CD4-positive, alpha-beta memory T cell (primary cell): ENCODE measurements at regions of chr18 and their contacts with region 1.

Region 1: GRCh38 chr18:11872479-11873136 is 21.4 kb downstream of the CHMP1B start:
- DNase-seq: peak in 2 of 5 donors; percentile 11 to 12
- H3K4me3 ChIP-seq: no peak overlapping the region
- H3K4me3 Mint-ChIP-seq: no peak overlapping the region
- H3K27ac ChIP-seq: no peak overlapping the region
- H3K27ac Mint-ChIP-seq: no peak overlapping the region
- H3K4me1 ChIP-seq: peaks cover 7% of the 10 kb centered on the region
- H3K4me1 Mint-ChIP-seq: peaks cover 0 to 4% (median 0%) of the 10 kb centered on the region in 4 donors
- H3K27me3 ChIP-seq: no peaks in the 10 kb centered on the region
- H3K27me3 Mint-ChIP-seq: peaks cover 0 to 4% of the 10 kb centered on the region in 2 donors

Region 2: DNA sequence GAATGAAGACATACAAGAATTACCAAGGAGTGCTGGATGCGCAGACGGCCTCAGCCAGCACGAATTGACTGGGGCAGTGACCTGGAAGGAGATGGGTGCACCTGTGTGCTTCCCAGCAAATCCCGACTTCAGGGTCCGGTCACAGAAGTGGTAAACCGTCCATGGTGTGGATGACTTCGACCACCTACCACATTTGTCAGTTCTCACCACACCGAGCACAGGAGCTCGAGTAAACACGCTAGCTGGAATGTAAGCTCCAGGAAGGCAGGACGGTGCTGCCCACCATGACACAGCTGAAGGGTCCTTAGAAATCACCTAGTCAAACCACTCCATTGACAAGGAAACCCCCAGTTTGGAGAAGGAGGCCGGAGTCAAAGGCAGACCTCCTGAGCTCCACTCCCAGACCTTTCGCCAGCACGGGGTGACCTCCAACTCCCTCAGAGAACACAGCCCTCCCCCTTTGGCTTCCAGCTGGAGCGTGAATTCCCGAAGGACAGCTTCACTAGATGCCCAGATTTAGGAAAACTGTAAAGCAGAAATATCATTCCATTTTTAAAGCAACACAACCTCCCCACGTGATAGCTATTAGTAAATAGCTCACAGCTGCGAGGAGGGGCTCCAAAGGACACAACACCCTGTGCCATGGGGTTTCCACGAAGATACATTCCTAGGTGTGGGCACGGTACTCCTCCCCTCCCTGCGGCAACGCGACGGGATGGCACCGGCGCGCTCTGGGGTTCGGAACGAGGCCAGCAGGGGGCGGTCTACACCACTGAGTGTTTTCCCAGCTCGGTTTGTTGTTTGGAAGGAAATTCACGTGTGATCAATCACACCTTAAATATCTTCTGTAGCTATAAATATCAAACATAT is 217.6 kb before region 1 on chr18:
- CTCF ChIA-PET with region 1: no interaction called
- POLR2A ChIA-PET with region 1: no interaction called
- intact Hi-C with region 1: loop called (anchors 5 kb)
- DNase-seq: peak in 3 of 5 donors; percentile 5 to 16 (median 13)
- H3K4me3 ChIP-seq: peak overlapping the region in 1 of 2 donors; percentile 8
- H3K4me3 Mint-ChIP-seq: no peak overlapping the region
- H3K27ac ChIP-seq: no peak overlapping the region
- H3K27ac Mint-ChIP-seq: no peak overlapping the region
- H3K4me1 ChIP-seq: no peaks in the 10 kb centered on the region
- H3K4me1 Mint-ChIP-seq: peaks cover 0 to 6% (median 3%) of the 10 kb centered on the region in 4 donors
- H3K27me3 ChIP-seq: no peaks in the 10 kb centered on the region
- H3K27me3 Mint-ChIP-seq: peaks cover 14 to 45% of the 10 kb centered on the region in 2 donors

Region 3: GRCh38 chr18:12076424-12077140 is 204.0 kb after region 1 on chr18:
- CTCF ChIA-PET with region 1: no interaction called
- POLR2A ChIA-PET with region 1: no interaction called
- intact Hi-C with region 1: no loop called
- DNase-seq: no peak
- H3K4me3 ChIP-seq: no peak overlapping the region
- H3K4me3 Mint-ChIP-seq: peak overlapping the region in 4 of 8 donors; percentile 6 to 74 (median 40)
- H3K27ac ChIP-seq: no peak overlapping the region
- H3K27ac Mint-ChIP-seq: no peak overlapping the region
- H3K4me1 ChIP-seq: no peaks in the 10 kb centered on the region
- H3K4me1 Mint-ChIP-seq: no peaks in the 10 kb centered on the region
- H3K27me3 ChIP-seq: no peaks in the 10 kb centered on the region
- H3K27me3 Mint-ChIP-seq: peaks cover 5 to 7% of the 10 kb centered on the region in 2 donors